ENCODE measurements at regions of chr1 and their contacts with region 1.

Region 1: DNA sequence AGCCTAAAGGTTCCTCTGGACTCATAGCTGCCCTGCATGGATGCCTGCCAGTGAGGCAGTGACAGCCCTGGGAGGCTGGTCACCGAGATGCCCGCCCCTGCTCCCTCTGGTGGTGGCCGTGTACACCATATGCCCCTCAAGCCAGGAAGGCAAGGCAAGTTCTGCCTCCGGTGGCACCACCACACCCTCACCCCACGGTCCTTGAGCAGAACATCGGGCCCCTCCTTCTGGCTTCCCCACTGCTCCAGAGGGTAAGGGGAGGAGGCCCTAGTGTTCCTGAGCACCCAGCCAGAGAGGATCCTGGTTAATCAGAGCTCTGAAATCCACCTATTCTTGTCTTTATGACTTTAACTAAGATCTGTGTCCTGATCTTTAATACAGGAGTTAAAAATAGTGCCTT is 1.6 kb upstream of the S100A14 start:
- DNase-seq: peak in 12 of 14 experiments; percentile 38 to 86 (median 59)
- ATAC-seq: peak; percentile 86
- H3K4me3 ChIP-seq: no peak overlapping the region
- H3K4me3 Mint-ChIP-seq: no peak overlapping the region
- H3K27ac ChIP-seq: no peak overlapping the region
- H3K27ac Mint-ChIP-seq: no peak overlapping the region
- H3K4me1 ChIP-seq: peaks cover 7% of the 10 kb centered on the region
- H3K4me1 Mint-ChIP-seq: peaks cover 5% of the 10 kb centered on the region
- H3K27me3 ChIP-seq: no peaks in the 10 kb centered on the region
- H3K27me3 Mint-ChIP-seq: no peaks in the 10 kb centered on the region
- CTCF ChIP-seq: peak; percentile 60

Region 2: GRCh38 chr1:153375511-153375910 is 242.2 kb before region 1 on chr1 and contains the start of gene S100A12:
- CTCF ChIA-PET with region 1: no interaction called
- POLR2A ChIA-PET with region 1: no interaction called
- intact Hi-C with region 1: no loop called
- DNase-seq: peak in 2 of 14 experiments; percentile 41 to 43
- ATAC-seq: no peak
- H3K4me3 ChIP-seq: no peak within 1 kb of the TSS
- H3K4me3 Mint-ChIP-seq: no peak within 1 kb of the TSS
- H3K27ac ChIP-seq: no peak within 1 kb of the TSS
- H3K27ac Mint-ChIP-seq: no peak within 1 kb of the TSS
- H3K4me1 ChIP-seq: no peaks in the 10 kb centered on the region
- H3K4me1 Mint-ChIP-seq: no peaks in the 10 kb centered on the region
- H3K27me3 ChIP-seq: peaks cover 6 to 14% of the 10 kb centered on the region in 2 experiments
- H3K27me3 Mint-ChIP-seq: peaks cover 34% of the 10 kb centered on the region
- CTCF ChIP-seq: no peak
- total RNA-seq, gene S100A12: 4.0 to 5.5 TPM

Region 3: GRCh38 chr1:153510984-153511410 is 106.7 kb before region 1 on chr1:
- CTCF ChIA-PET with region 1: interaction called, 4 read pairs
- POLR2A ChIA-PET with region 1: no interaction called
- intact Hi-C with region 1: loop called (anchors 1 kb)
- DNase-seq: peak; percentile 64 to 91 (median 75)
- ATAC-seq: peak; percentile 79
- H3K4me3 ChIP-seq: no peak overlapping the region
- H3K4me3 Mint-ChIP-seq: no peak overlapping the region
- H3K27ac ChIP-seq: no peak overlapping the region
- H3K27ac Mint-ChIP-seq: no peak overlapping the region
- H3K4me1 ChIP-seq: peaks cover 17% of the 10 kb centered on the region
- H3K4me1 Mint-ChIP-seq: peaks cover 8% of the 10 kb centered on the region
- H3K27me3 ChIP-seq: no peaks in the 10 kb centered on the region
- H3K27me3 Mint-ChIP-seq: no peaks in the 10 kb centered on the region
- CTCF ChIP-seq: peak; percentile 98

Measured in CD4-positive, alpha-beta T cell (primary cell).